Mammary epithelial cell (primary cell): ENCODE measurements at regions of chr6 and their contacts with region 1.

Region 1: GRCh38 chr6:71383901-71384489 is 95.4 kb downstream of the OGFRL1 start:
- DNase-seq: no peak
- H3K4me3 ChIP-seq: no peak overlapping the region
- H3K27ac ChIP-seq: no peak overlapping the region
- H3K4me1 ChIP-seq: peaks cover 49% of the 10 kb centered on the region
- H3K27me3 ChIP-seq: no peaks in the 10 kb centered on the region
- CTCF ChIP-seq: peak; percentile 43 to 61

Region 2: DNA sequence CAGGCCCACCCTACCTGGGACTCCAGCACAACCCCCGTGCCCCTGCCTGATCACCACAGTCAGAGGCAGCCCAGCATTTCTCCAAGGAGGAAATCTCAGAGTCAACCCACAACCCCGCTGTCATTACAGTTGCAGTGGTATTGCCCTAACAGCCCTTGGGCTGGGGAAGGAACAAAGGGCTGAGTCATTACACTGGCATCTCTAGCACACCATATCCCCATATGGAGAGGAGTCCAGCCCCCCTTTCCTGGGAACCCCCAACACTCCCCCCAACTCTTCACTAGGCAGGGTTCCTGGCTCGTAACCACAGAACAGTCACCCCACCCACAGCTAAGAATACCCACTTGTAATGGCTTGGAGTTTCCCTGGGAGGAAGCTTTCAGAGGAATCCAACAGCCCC is 244.7 kb before region 1 on chr6:
- CTCF ChIA-PET with region 1: no interaction called
- dilution Hi-C with region 1: no loop called
- in situ Hi-C with region 1: no loop called
- intact Hi-C with region 1: no loop called
- DNase-seq: peak; percentile 73
- H3K4me3 ChIP-seq: no peak overlapping the region
- H3K27ac ChIP-seq: no peak overlapping the region
- H3K4me1 ChIP-seq: peaks cover 19% of the 10 kb centered on the region
- H3K27me3 ChIP-seq: no peaks in the 10 kb centered on the region
- CTCF ChIP-seq: no peak

Region 3: DNA sequence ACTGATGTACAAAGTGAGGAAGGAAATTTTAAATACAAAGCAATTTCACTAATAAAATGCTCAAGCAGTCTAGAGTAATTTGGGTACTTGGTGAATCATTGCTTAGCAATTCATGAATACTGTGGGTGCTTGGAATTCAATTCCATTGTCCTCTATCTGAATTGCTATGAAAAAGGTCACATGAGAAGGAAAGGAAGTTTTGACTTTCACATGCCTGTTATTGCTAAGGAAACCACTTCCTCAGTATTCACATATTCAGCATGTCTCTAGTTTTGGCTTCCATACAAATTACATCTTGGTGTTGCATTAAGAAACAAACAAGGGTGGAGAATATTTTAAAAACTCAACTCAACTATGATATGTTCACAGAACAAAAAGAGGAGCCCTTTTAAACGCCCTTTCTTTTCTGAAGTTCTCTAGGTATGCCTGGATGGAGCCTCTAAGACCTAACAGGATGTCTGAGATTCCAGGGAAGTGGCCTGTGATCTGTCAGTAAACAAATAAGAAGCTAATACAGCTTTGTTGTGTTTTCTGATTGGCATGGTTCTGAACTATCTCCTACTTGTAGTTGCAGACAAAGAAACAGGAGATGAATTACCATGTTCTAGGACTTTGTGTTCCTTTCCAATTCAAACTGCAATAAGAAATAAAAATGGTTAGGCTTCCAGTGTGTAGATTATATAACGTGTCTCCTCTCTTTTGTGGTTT is 95.0 kb after region 1 on chr6:
- CTCF ChIA-PET with region 1: no interaction called
- dilution Hi-C with region 1: no loop called
- in situ Hi-C with region 1: no loop called
- intact Hi-C with region 1: loop called (anchors 1 kb)
- DNase-seq: peak; percentile 85
- H3K4me3 ChIP-seq: no peak overlapping the region
- H3K27ac ChIP-seq: peak overlapping the region; percentile 87
- H3K4me1 ChIP-seq: peaks cover 38% of the 10 kb centered on the region
- H3K27me3 ChIP-seq: no peaks in the 10 kb centered on the region
- CTCF ChIP-seq: no peak

Region 4: DNA sequence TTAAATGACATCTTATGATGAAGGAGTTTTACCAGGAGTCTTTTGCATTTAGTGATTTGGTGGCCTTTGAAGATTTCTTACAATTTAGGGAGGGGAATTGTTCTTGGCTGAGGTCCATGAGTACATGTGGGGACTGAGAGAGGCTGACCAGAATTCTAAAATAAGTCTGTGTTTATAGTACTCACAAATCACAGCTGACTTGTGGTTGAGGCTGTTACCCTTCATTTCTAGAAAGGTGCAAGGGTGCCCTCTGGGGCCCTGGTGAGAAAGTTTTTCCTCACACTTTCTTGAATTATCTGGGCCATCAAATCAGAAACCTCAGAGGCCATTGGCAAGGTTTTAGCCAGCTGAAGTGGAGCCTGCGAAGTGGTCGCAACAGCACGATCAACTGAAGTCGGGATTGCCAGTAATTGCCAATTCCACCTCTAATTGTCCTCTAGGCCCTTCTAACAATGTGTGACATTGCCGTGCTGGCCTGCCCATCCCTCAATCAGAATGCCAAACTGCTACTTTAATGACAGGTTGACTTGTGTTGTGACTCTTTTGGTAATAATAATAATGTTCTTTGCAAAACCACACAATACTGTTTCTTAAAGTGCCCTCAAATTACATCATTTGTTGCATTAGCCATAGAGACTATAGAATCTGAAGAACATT is 126.2 kb after region 1 on chr6:
- CTCF ChIA-PET with region 1: no interaction called
- dilution Hi-C with region 1: loop called (anchors 10 kb)
- in situ Hi-C with region 1: loop called (anchors 10 kb)
- intact Hi-C with region 1: loop called (anchors 1 kb)
- DNase-seq: peak; percentile 58
- H3K4me3 ChIP-seq: no peak overlapping the region
- H3K27ac ChIP-seq: no peak overlapping the region
- H3K4me1 ChIP-seq: peaks cover 2% of the 10 kb centered on the region
- H3K27me3 ChIP-seq: no peaks in the 10 kb centered on the region
- CTCF ChIP-seq: peak; percentile 61 to 72

Region 5: DNA sequence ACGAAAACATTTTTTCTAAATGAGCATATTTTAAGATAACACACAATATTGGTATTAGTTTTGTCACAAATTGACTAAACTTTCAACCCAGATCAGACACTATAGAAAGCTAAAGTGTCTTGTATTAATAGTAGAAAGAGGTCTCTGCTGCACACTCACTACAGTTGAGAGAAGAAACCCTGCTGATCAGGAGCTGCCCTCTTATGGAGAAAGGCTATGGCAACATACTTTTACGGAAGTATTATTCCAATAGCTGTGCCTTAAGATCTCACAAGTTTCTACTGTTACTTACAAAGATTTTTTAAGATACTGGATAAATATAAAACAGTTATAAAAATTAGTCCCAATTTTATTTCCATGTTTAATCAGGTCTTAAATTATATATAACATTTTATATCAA is 658.1 kb after region 1 on chr6:
- CTCF ChIA-PET with region 1: no interaction called
- dilution Hi-C with region 1: no loop called
- in situ Hi-C with region 1: loop called in 1 of 2 experiments (anchors 25 kb)
- intact Hi-C with region 1: no loop called
- DNase-seq: no peak
- H3K4me3 ChIP-seq: no peak overlapping the region
- H3K27ac ChIP-seq: no peak overlapping the region
- H3K4me1 ChIP-seq: no peaks in the 10 kb centered on the region
- H3K27me3 ChIP-seq: peaks cover 4% of the 10 kb centered on the region
- CTCF ChIP-seq: peak; percentile 2 to 56